ENCODE measurements at regions of chr13 and their contacts with region 1.

Region 1: DNA sequence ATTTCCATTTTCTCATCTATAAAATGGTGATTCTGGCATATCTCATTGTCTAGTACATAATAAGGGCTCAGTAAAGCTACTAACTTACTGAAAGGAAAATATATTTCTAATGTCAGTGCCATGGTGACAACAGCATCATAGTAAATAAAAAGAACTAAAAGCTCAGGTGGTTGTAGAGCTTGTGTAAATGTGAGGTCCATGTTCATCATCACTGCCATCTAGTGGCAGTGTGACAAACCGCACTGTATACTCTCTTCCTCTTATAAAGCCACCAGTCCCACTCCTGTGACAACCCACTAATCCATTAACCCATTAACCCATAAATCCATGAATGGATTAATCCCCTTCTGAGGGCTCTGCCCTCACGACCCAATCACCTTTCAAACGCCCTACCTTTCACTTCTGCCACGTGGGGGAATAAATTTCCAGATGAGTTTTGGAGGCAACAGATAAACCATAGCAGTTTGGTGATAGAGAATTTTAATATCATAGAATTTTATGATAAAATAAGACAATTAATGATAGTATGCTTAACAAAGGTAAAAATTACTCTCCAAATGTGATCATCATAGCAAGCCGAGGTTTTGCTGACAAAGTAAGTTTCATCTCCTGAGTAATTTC is 160.4 kb upstream of the SGCG start:
- DNase-seq: no peak
- H3K4me3 ChIP-seq: no peak overlapping the region
- H3K27ac ChIP-seq: no peak overlapping the region
- H3K4me1 ChIP-seq: no peaks in the 10 kb centered on the region
- H3K27me3 ChIP-seq: no peaks in the 10 kb centered on the region
- CTCF ChIP-seq: peak; percentile 73 to 88 (median 84)
- EP300 ChIP-seq: no peak
- POLR2A ChIP-seq: no peak

Region 2: GRCh38 chr13:22801402-22802003 is 218.8 kb before region 1 on chr13:
- intact Hi-C with region 1: loop called (anchors 2 kb)
- DNase-seq: no peak
- H3K4me3 ChIP-seq: no peak overlapping the region
- H3K27ac ChIP-seq: no peak overlapping the region
- H3K4me1 ChIP-seq: no peaks in the 10 kb centered on the region
- H3K27me3 ChIP-seq: peaks cover 0 to 14% (median 0%) of the 10 kb centered on the region in 4 donors
- CTCF ChIP-seq: peak; percentile 22 to 40 (median 24)
- EP300 ChIP-seq: no peak
- POLR2A ChIP-seq: no peak

Measured in esophagus muscularis mucosa (tissue), 4 donors.